Breast epithelium (tissue), 4 donors: ENCODE measurements at regions of chr9 and their contacts with region 1.

Region 1: DNA sequence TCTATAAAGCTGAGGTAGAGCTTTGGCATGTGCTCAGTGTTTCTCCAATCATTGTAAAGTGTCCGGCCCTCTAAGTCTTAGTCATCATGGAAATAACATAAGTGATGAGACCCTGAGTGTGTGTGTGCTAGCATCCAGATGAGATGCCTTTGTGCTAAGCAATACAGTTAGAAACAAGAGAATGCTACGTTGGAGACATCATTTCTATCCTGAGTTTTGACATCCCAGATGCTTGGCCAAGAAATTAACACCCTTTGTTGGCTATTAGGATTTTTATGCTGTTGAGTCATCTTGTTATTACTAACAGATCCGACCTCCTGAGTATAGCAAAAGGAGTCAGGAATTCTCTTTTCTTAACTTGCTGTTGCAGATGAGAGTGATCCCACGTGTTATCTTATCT is 508.0 kb downstream of the GADD45G start:
- DNase-seq: no peak
- H3K4me3 ChIP-seq: no peak overlapping the region
- H3K27ac ChIP-seq: no peak overlapping the region
- H3K4me1 ChIP-seq: no peaks in the 10 kb centered on the region
- H3K27me3 ChIP-seq: peaks cover 0 to 8% of the 10 kb centered on the region in 2 donors
- CTCF ChIP-seq: no peak
- POLR2A ChIP-seq: no peak

Region 2: DNA sequence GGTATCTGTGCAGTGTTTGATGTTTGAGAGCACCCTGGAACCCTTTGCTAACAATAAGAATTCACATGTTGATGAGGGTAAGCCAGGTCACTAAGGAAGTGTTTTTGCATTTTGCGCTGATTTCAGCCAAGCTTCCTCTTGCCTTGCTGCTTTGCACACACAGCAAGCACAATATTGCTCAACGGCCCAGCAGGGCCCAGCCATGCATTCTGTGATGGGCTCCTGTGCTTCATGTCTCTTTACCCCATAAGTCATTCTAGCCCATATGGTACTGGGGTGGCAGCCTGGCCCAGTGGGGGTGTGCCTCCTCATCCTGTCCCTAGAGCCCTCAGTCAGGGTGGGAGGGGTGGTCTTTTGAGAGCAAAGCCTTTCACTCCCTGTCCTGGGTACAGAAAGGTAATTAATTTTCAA is 26.7 kb before region 1 on chr9:
- intact Hi-C with region 1: no loop called
- DNase-seq: no peak
- H3K4me3 ChIP-seq: no peak overlapping the region
- H3K27ac ChIP-seq: no peak overlapping the region
- H3K4me1 ChIP-seq: no peaks in the 10 kb centered on the region
- H3K27me3 ChIP-seq: no peaks in the 10 kb centered on the region
- CTCF ChIP-seq: no peak
- POLR2A ChIP-seq: no peak

Region 3: GRCh38 chr9:90838100-90838499 is 725.3 kb after region 1 on chr9:
- intact Hi-C with region 1: loop called (anchors 5 kb)
- DNase-seq: no peak
- H3K4me3 ChIP-seq: no peak overlapping the region
- H3K27ac ChIP-seq: no peak overlapping the region
- H3K4me1 ChIP-seq: no peaks in the 10 kb centered on the region
- H3K27me3 ChIP-seq: no peaks in the 10 kb centered on the region
- CTCF ChIP-seq: no peak
- POLR2A ChIP-seq: no peak